ENCODE measurements at regions of chr20 and their contacts with region 1.

Region 1: GRCh38 chr20:63955827-63956663 is at the start of gene UCKL1:
- DNase-seq: peak; percentile 88
- H3K4me3 Mint-ChIP-seq: peak within 1 kb of the TSS; percentile 84
- H3K27ac Mint-ChIP-seq: peak within 1 kb of the TSS; percentile 83
- H3K4me1 Mint-ChIP-seq: peaks cover 24% of the 10 kb centered on the region
- H3K27me3 Mint-ChIP-seq: no peaks in the 10 kb centered on the region
- total RNA-seq, gene UCKL1: 48.7 and 51.2 TPM in 2 replicates

Region 2: DNA sequence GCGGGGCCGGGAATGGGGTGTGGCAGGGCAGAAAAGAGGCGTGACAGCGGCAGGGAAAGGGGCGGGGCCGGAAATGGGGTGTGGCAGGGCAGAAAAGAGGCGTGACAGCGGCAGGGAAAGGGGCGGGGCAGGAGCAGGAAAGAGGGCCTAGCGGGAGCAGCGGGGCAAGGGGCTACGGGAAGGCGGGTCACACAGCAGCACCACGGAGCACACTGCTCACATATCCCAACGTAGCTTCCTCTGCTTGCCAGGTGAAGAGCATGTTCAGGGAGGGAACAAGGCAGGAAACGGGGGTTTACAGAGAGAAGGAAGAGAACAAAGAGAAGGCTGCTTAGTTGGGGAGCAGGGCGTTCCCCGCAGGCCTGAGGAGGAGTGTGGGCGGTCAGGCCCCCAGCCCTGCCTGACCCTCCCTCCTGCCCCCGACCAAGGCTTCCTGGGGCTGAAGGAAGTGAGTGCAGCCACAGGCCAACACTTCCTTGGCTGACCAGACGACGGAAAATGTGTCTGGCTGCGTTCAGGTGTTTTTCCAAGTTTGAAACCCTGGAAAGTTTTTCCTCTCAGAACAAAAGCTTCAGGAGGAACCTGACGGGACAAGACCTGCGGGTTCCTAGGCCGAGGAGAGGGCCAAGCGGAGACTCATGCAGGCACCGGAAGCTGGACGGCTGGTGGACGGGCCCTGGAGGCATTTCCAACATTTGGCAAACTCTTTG is 13.6 kb before region 1 on chr20:
- intact Hi-C with region 1: no loop called
- DNase-seq: peak; percentile 54
- H3K4me3 Mint-ChIP-seq: no peak overlapping the region
- H3K27ac Mint-ChIP-seq: no peak overlapping the region
- H3K4me1 Mint-ChIP-seq: peaks cover 12% of the 10 kb centered on the region
- H3K27me3 Mint-ChIP-seq: no peaks in the 10 kb centered on the region

Region 3: DNA sequence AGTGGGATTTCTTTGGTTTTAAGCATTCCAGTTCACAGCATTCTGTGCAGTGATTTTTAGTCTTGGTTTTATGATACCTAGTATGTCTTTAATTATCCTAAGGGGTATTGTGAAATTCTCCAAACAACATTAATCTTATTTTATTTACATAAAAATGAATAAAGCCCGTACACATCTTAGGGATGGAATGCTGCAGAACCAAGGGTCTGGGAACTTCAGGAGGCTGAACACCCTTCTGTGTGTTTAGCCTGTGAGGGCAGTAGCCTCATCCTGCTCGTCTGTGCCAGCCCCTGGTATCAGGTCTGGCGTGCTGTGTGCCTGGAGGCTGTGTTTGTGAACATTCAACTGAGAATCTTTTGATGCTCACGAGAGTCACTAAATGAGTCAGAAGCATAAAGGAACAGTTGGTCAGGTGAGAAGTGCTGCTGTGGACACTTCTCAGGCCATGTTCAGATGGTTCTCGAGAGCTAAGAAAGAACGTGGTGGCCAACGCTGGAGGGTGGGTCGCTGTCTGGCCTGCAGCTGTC is 54.7 kb after region 1 on chr20:
- intact Hi-C with region 1: no loop called
- DNase-seq: no peak
- H3K4me3 Mint-ChIP-seq: no peak overlapping the region
- H3K27ac Mint-ChIP-seq: peak overlapping the region; percentile 65
- H3K4me1 Mint-ChIP-seq: peaks cover 28% of the 10 kb centered on the region
- H3K27me3 Mint-ChIP-seq: no peaks in the 10 kb centered on the region

Region 4: DNA sequence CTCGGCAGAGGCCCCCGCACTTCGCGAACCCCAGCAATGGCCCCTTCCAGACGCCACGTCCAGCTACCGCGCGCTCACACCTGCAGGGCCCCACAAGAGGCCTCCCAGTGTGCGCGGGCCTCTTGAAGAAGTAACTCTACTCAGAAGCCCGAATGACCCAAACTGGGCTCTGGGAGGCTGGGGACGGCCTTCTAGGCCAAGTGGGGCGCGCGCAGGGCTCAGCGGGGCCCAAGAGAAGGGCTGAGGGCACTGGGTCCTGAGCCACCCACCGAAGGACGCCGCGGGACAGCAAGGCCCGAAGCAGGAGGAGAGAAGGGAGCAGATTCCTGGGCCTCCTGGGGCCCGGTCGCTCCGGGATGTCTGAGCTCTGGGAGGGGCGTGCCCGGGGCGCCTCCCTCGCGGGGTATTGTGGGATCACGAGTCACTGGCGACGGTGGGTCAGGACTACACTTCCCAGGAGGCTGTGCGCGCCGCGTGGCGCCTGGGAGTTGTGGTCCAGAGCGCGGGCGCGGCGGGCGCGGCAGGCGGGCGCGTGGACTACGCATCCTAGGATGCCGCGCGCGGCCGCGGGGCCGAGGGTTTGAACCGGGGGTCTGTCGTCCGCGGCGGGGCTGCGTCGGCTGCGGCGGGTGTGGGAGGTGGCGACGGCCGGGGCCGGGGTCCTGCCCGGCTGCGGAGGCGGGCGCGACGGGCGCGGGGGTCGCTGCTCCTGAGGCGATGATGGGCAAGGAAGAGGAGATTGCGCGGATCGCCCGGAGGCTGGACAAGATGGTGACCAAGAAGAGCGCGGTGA is 106.7 kb after region 1 on chr20 and contains the start of gene TCEA2:
- intact Hi-C with region 1: loop called (anchors 2 kb)
- DNase-seq: peak; percentile 93
- H3K4me3 Mint-ChIP-seq: peak within 1 kb of the TSS; percentile 89
- H3K27ac Mint-ChIP-seq: peak within 1 kb of the TSS; percentile 88
- H3K4me1 Mint-ChIP-seq: peaks cover 46% of the 10 kb centered on the region
- H3K27me3 Mint-ChIP-seq: no peaks in the 10 kb centered on the region
- total RNA-seq, gene TCEA2: 49.0 and 49.9 TPM in 2 replicates